ENCODE measurements at regions of chr3 and their contacts with region 1.

Region 1: GRCh38 chr3:184543843-184544512 is 17.6 kb upstream of the EPHB3 start:
- DNase-seq: no peak
- H3K4me3 ChIP-seq: no peak overlapping the region
- CTCF ChIP-seq: peak; percentile 71

Region 2: DNA sequence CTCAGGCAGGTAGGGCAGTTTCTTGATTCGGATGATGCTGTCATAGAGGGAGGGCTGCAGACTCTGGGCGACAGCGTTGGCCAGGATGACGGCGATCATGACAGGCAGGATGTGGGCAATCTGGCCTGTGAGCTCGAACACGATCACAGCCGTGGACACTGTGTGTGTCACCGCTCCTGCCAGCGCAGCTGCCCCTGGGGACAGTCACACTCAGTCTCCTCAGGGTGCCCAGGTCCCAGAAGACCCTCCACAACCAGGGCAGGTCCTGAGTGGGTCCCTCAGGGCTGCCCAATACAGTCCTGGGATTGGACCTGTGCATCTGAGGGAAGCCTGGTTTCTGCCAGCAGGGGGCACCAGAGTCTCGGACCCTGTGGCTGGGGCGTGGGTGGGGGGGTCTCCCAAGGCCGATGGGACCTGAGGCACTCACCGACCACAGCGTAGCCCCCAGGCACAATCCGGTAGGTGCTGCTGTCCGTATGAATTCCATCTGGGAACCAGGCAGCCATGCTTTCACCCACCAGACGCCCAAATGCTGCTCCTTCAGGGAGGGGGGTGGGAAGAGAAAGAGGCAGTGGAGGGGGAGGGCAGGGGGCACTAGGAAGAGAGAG is 189.8 kb before region 1 on chr3:
- CTCF ChIA-PET with region 1: interaction called, 46 read pairs
- POLR2A ChIA-PET with region 1: no interaction called
- DNase-seq: no peak
- H3K4me3 ChIP-seq: no peak overlapping the region
- CTCF ChIP-seq: peak; percentile 77

Region 3: GRCh38 chr3:184417619-184418327 is 126.2 kb before region 1 on chr3:
- CTCF ChIA-PET with region 1: interaction called, 20 read pairs
- POLR2A ChIA-PET with region 1: no interaction called
- DNase-seq: no peak
- H3K4me3 ChIP-seq: no peak overlapping the region
- CTCF ChIP-seq: peak; percentile 99

Region 4: DNA sequence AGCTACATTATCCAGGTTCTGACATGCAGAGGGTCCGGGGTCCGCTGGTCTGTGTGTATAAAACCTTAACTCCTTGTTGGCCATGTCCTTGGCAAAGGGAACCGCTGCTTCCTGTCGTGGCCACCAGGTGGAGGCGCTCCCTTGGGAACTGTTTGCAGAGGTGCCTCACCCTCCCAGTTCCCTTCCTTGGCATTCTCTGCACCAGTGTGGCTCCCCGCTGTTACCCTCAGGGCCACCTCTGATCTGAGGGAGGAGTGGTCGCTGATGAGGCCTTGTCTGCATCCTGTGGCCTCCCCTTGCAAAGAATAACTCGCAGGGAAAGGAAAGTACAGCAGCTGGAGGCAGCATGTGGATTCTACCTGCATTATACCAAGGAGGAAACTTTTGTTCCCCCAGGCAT is 74.6 kb before region 1 on chr3:
- CTCF ChIA-PET with region 1: interaction called, 15 read pairs
- POLR2A ChIA-PET with region 1: no interaction called
- DNase-seq: no peak
- H3K4me3 ChIP-seq: no peak overlapping the region
- CTCF ChIP-seq: peak; percentile 58

Region 5: GRCh38 chr3:184523825-184524615 is 20.0 kb before region 1 on chr3:
- CTCF ChIA-PET with region 1: interaction called, 130 read pairs
- POLR2A ChIA-PET with region 1: no interaction called
- DNase-seq: no peak
- H3K4me3 ChIP-seq: no peak overlapping the region
- CTCF ChIP-seq: no peak

Region 6: GRCh38 chr3:184805351-184806038 is 261.5 kb after region 1 on chr3:
- CTCF ChIA-PET with region 1: interaction called, 13 read pairs
- POLR2A ChIA-PET with region 1: no interaction called
- DNase-seq: no peak
- H3K4me3 ChIP-seq: no peak overlapping the region
- CTCF ChIP-seq: no peak